Activated CD8-positive, alpha-beta T cell treated with anti-CD3 and anti-CD28 coated beads, Interleukin-2, amount 10 ng/mL, durations not matched to agents 7 days and 5 days (primary cell): ENCODE measurements at regions of chr10 and their contacts with region 1.

Region 1: GRCh38 chr10:3162533-3162932 is 10.0 kb downstream of the PITRM1 start:
- DNase-seq: no peak
- ATAC-seq: peak; percentile 47
- H3K4me3 Mint-ChIP-seq: no peak overlapping the region
- H3K27ac Mint-ChIP-seq: no peak overlapping the region
- H3K4me1 Mint-ChIP-seq: no peaks in the 10 kb centered on the region
- H3K27me3 Mint-ChIP-seq: no peaks in the 10 kb centered on the region

Region 2: DNA sequence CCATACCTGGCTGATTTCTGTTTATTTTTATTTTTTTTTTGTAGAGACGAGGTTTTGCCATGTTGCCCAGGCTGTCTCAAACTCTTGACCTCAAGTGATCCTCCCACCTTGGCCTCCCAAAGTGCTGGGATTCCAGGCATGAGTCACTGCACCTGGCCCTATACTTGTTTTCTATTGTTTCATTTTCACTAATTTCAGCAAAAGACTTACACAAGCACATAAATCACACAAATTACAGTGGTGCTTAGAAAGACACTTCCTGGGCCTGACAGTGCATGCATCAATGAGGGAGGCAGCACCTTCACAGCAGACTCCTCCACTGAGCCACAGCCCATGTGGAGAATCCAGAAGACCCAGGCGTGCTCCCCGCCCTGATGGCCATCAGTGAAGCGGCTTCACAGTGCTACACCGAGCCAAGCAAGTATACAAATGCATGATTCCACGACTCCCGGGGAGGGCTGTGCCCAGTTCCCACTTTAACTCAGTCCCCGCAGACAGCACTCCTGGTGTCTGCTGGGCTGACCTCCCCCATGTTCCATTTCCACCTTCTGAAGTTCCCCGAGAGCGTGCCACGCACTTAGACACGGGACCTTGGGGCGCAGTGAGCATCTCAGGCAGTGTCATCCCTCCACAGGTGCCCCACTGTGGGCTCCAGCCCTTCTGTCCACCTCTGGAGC is 10.5 kb before region 1 on chr10:
- CTCF ChIA-PET with region 1: interaction called, 13 read pairs
- POLR2A ChIA-PET with region 1: no interaction called
- DNase-seq: no peak
- ATAC-seq: no peak
- H3K4me3 Mint-ChIP-seq: no peak overlapping the region
- H3K27ac Mint-ChIP-seq: peak overlapping the region; percentile 18
- H3K4me1 Mint-ChIP-seq: no peaks in the 10 kb centered on the region
- H3K27me3 Mint-ChIP-seq: no peaks in the 10 kb centered on the region

Region 3: DNA sequence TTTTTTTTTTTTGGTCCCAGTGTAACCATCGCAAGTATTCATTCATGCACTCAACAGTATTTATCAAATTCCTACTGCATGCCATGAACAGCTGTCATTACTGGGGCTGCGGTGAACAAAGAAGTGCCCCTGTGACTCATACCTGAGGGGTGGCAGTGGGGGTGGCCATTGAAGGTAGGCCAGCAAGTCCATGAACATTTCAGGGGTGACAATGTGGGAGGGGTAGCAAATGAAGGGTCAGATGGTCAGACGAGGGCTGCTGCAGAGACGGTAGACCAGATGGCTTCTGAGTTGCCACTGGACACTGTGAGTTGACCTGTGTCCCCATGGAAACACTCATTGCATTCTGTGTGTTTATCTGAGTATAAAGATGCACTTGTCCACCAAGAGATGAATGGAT is 102.6 kb after region 1 on chr10:
- CTCF ChIA-PET with region 1: no interaction called
- POLR2A ChIA-PET with region 1: no interaction called
- DNase-seq: no peak
- ATAC-seq: no peak
- H3K4me3 Mint-ChIP-seq: no peak overlapping the region
- H3K27ac Mint-ChIP-seq: no peak overlapping the region
- H3K4me1 Mint-ChIP-seq: no peaks in the 10 kb centered on the region
- H3K27me3 Mint-ChIP-seq: peaks cover 14% of the 10 kb centered on the region